Posterior cingulate gyrus (tissue), 11 donors: ENCODE measurements at regions of chr6 and their contacts with region 1.

Region 1: GRCh38 chr6:131063028-131063763 is at the start of gene EPB41L2:
- DNase-seq: peak; percentile 76 to 98 (median 84)

Region 2: DNA sequence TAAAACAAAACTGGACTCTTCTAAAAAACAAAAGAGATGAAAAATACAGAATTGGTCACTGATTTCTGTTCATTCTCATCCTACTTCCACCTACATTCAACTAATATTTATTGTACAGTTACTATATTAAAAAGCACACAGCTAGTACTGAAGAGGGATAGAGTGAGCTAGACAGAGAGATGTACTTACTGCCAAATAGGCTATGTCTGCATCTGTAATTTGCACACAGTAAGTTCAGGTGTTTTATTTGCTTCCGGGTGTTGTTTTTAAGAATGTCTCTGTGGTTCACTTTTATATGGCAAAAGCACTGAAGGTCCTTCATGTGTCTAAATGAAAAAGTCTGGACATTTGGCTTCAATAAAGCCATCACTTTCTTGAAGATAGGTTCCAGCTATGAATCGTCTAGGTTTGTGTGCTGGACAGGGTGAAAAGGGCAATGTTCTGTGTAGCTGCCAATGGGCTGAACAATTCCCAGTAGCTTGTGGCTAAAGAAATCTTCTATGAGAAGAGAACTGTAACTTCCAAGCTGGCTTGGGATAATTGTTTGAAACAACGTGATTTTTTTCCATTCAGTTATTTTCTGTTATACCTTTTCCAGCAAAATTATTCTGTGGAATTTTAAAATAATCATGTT is 47.4 kb before region 1 on chr6:
- intact Hi-C with region 1: loop called (anchors 5 kb)
- DNase-seq: no peak

Region 3: GRCh38 chr6:131116749-131117360 is 53.7 kb after region 1 on chr6:
- intact Hi-C with region 1: loop called (anchors 5 kb)
- DNase-seq: no peak

Region 4: GRCh38 chr6:131135244-131136020 is 72.2 kb after region 1 on chr6 and contains the start of gene AKAP7:
- intact Hi-C with region 1: loop called (anchors 1 kb)
- DNase-seq: peak; percentile 65 to 96 (median 74)